ENCODE measurements at regions of chr11 and their contacts with region 1.

Region 1: DNA sequence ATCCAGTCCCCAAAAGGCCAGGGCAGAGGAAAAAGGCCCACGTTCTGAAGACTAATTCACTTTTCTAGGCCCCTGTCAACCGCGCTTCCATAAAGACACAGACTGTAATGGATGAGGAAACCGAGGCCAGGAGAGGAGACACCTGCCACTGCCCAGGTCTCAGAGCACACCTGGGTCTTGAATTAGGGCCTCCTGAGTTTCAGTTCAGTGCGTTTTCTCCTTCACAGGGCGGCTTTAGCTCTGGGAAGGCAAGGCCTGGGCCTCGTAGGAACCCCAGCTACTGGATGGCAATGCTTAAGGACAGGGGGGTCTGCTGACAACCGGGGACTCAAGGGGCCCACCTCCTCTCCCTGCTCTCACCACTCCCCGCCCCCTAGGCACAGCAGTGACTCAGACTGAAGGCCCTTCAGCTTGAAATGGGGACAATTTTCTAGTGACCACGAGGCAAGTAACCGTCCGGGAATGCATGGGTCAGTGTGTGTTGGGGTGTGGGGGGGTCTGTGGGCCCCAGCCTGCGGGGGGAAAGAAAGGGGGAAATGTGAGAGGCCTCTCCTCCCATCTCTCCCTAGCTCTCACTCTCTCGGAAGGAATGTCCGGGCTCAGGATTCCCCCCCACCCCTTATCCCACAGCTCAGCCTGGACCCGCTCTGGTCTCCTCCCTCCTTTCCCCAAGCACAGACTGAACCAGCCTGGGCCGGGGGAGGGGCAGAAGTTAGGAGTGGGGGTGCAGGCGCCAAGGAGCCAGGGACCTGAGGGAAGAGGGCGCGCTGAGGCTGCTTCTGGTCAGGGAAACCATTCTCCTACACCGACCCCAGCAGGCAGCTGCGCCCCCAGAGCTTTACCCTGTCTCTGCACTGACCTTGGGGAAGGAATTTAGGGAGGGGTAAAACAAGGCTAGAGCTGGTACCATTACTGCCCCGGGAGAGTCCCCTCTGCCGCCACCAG is 17.2 kb downstream of the CREB3L1 start:
- DNase-seq: no peak
- H3K4me3 ChIP-seq: peak overlapping the region; percentile 40 to 74 (median 62)
- H3K27ac ChIP-seq: peak overlapping the region in 1 of 2 donors; percentile 53
- H3K4me1 ChIP-seq: peaks cover 0 to 13% of the 10 kb centered on the region in 2 donors
- H3K27me3 ChIP-seq: no peaks in the 10 kb centered on the region
- CTCF ChIP-seq: no peak
- POLR2A ChIP-seq: no peak

Region 2: GRCh38 chr11:46247664-46248063 is 47.0 kb before region 1 on chr11:
- intact Hi-C with region 1: loop called (anchors 1 kb)
- DNase-seq: no peak
- H3K4me3 ChIP-seq: no peak overlapping the region
- H3K27ac ChIP-seq: no peak overlapping the region
- H3K4me1 ChIP-seq: no peaks in the 10 kb centered on the region
- H3K27me3 ChIP-seq: no peaks in the 10 kb centered on the region
- CTCF ChIP-seq: peak in 2 of 3 donors; percentile 23 to 49
- POLR2A ChIP-seq: no peak

Region 3: GRCh38 chr11:46338988-46339666 is 44.5 kb after region 1 on chr11:
- intact Hi-C with region 1: loop called (anchors 2 kb)
- DNase-seq: no peak
- H3K4me3 ChIP-seq: peak overlapping the region; percentile 21 to 57 (median 26)
- H3K27ac ChIP-seq: peak overlapping the region; percentile 61 to 77
- H3K4me1 ChIP-seq: no peaks in the 10 kb centered on the region
- H3K27me3 ChIP-seq: no peaks in the 10 kb centered on the region
- CTCF ChIP-seq: no peak
- POLR2A ChIP-seq: no peak